ENCODE measurements at regions of chr6 and their contacts with region 1.

Region 1: DNA sequence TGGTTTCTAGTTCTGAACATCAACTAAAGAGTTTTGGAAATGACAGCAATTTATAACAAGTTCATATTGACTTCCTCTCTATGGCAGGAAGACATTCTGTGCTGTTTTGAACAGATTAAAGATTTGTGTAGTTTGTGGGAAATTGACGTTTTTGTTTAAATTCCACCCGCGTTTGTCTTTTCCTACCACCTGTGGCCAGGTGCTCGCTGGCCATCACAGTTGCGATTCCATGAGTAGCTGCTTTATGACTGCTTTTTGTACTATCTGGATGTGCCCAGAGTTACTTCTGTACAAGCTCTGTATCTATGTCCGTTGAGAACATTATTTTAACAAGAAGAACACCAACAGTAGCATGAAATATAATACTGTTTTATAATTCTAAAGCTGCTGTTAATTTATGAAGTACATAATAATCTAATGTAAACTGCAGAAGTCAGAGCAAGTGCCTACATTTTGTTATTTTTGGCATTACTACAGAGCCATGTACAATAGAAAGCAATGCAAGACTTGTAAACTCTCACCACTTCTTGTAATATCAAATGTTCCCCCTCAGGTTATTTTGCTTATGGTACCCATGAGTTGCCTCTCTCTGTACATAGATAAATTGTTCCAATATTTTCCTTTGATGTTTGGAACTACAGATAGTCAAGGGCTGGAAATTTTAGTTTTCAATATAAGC is 33.5 kb downstream of the ZBTB2 start:
- DNase-seq: no peak
- ATAC-seq: no peak
- H3K4me3 ChIP-seq: no peak overlapping the region
- H3K27ac ChIP-seq: no peak overlapping the region
- H3K4me1 ChIP-seq: peaks cover 0 to 8% of the 10 kb centered on the region in 2 experiments; a peak in 1 of 4 replicates
- H3K27me3 ChIP-seq: no peaks in the 10 kb centered on the region
- CTCF ChIP-seq: no peak
- POLR2A ChIP-seq: no peak
- RAD21 ChIP-seq: 0 out of 2 replicates have a peak, but pooled peaks have one; percentile 1

Region 2: DNA sequence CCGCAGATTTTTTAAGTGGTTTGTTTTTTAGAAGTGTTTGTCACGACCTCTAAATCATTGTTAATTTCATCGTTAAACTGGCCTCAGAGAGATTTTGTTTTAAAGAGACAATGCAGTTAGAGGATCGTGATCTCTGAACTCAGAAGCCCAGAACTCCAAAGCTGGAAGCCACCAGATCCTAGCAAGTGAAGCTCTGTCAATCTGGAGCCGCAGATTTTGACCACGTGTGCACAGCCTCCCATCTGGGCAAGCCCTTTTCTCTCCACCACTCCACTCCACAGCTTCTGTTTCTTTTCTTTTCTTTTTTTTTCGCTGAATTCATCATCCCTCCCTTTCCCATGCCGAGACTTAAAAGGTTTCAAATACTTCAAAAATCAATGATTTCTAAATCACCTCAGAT is 307.4 kb after region 1 on chr6:
- CTCF ChIA-PET with region 1: no interaction called
- POLR2A ChIA-PET with region 1: no interaction called
- RAD21 ChIA-PET with region 1: no interaction called
- intact Hi-C with region 1: no loop called
- DNase-seq: no peak
- ATAC-seq: no peak
- H3K4me3 ChIP-seq: no peak overlapping the region
- H3K27ac ChIP-seq: no peak overlapping the region
- H3K4me1 ChIP-seq: peaks cover 17 to 47% of the 10 kb centered on the region in 2 experiments
- H3K27me3 ChIP-seq: no peaks in the 10 kb centered on the region
- CTCF ChIP-seq: no peak
- POLR2A ChIP-seq: no peak
- RAD21 ChIP-seq: no peak

Region 3: DNA sequence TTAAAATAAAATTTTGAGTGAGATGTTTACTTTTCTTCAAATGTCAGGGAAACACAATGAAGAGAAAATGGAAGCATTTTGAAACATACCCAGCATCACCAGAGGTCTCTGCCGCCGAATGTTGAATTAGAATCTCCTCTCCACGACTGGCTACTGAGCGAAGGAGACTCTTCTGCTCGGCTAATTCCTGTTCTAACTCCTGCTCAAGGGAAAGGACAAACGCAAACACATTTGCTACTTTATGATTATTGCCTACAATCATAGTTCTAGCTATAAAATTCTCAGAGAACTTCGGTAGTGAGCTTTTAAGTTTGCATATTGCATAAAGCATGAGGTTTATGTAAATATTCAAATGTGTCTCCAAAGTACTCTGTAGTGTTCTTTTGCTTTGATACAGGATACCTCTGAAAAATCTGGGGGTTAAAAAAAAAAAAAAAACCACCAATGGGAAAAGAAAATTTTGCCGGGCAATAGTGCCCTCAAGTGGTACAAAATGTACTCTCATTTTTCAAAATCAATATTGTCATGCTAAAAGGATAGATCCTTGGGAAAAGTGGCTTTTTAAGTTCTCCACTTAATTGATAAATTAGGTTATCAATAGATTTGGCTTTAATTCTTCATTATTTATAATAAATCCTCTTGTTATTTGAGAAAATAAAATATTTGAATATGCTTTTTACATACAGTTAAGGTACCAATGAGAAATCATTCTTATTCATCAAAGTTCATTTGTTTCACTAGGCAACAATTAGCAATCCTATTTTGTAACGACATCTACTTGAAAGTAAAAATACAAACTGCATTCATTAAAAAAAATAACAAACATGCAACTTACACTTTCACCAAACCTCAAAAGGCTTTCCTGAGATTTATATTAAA is 910.3 kb after region 1 on chr6:
- CTCF ChIA-PET with region 1: no interaction called
- POLR2A ChIA-PET with region 1: no interaction called
- RAD21 ChIA-PET with region 1: no interaction called
- intact Hi-C with region 1: loop called (anchors 5 kb)
- DNase-seq: no peak
- ATAC-seq: no peak
- H3K4me3 ChIP-seq: no peak overlapping the region
- H3K27ac ChIP-seq: no peak overlapping the region
- H3K4me1 ChIP-seq: no peaks in the 10 kb centered on the region
- H3K27me3 ChIP-seq: no peaks in the 10 kb centered on the region
- CTCF ChIP-seq: peak; percentile 43 to 71 (median 71); a peak in 4 of 6 replicates
- POLR2A ChIP-seq: no peak
- RAD21 ChIP-seq: peak; percentile 73

Measured in HCT116 (cell line).